H1 (cell line): ENCODE measurements at regions of chr1 and their contacts with region 1.

Region 1: DNA sequence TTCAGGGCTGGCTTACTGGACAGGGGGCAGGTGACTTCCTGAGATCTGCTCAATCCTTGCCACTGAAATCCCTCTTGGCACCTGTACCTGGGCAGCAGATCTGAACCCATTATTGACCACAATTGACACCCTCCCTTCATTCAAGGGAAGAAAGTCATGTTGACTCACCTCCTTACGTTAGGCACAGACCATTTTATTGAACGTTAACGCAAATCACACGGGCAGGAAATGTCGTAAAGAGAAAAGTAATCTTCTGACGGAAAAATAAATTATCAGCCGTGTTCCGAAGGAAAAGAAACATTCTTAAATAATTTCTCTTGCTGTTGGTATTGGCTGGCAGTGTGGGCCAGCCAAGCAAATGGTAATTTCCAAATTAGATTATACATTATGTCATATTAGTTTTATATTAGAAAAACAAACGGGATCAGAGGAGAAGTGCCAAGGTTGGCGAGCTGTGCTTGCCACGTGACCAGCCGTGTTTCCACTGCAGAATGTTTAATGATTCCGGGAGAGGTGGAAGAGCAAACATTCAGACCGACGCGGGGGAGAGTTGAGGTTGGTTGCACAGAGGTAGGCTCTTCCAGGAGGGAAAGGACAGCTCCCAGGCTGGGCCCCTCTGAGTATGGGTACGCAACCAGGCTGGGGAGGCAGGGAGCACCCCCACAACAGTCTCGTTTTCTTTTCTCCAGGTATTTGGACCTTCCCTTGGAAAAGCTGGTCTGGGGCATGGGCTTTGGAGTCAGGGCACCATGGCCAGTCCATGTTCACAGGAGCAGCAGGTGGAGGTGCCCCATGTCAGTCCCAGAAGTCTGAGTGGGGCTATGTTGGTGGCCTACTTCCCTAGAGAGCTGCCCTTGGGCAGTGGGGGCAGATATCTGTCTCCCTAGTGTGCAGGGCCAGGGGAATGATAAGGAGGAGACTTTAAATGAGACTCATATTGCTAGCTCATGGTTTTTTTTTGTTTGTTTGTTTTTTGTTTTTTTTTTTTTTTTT is 121.1 kb downstream of the FOXD2 start:
- DNase-seq: no peak
- H3K4me3 ChIP-seq: no peak overlapping the region
- H3K27ac ChIP-seq: no peak overlapping the region
- H3K4me1 ChIP-seq: peaks cover 0 to 15% (median 4%) of the 10 kb centered on the region in 4 experiments; a peak in 3 of 7 replicates
- H3K27me3 ChIP-seq: peaks cover 0 to 3% (median 0%) of the 10 kb centered on the region in 4 experiments; a peak in 3 of 7 replicates
- CTCF ChIP-seq: no peak
- EP300 ChIP-seq: no peak
- POLR2A ChIP-seq: no peak
- RAD21 ChIP-seq: no peak

Region 2: GRCh38 chr1:47532921-47533792 is 25.7 kb before region 1 on chr1:
- CTCF ChIA-PET with region 1: interaction called, 29 read pairs
- POLR2A ChIA-PET with region 1: no interaction called
- DNase-seq: peak in 1 of 2 experiments; percentile 84
- H3K4me3 ChIP-seq: peak overlapping the region; percentile 48 to 67 (median 58)
- H3K27ac ChIP-seq: no peak overlapping the region
- H3K4me1 ChIP-seq: peaks cover 3 to 10% (median 7%) of the 10 kb centered on the region in 4 experiments
- H3K27me3 ChIP-seq: peaks cover 0 to 7% (median 4%) of the 10 kb centered on the region in 4 experiments; a peak in 2 of 7 replicates
- CTCF ChIP-seq: 0 out of 4 replicates have a peak, but pooled peaks of 1 of the 3 experiments have one; percentile 2
- EP300 ChIP-seq: no peak
- POLR2A ChIP-seq: no peak
- RAD21 ChIP-seq: no peak

Region 3: DNA sequence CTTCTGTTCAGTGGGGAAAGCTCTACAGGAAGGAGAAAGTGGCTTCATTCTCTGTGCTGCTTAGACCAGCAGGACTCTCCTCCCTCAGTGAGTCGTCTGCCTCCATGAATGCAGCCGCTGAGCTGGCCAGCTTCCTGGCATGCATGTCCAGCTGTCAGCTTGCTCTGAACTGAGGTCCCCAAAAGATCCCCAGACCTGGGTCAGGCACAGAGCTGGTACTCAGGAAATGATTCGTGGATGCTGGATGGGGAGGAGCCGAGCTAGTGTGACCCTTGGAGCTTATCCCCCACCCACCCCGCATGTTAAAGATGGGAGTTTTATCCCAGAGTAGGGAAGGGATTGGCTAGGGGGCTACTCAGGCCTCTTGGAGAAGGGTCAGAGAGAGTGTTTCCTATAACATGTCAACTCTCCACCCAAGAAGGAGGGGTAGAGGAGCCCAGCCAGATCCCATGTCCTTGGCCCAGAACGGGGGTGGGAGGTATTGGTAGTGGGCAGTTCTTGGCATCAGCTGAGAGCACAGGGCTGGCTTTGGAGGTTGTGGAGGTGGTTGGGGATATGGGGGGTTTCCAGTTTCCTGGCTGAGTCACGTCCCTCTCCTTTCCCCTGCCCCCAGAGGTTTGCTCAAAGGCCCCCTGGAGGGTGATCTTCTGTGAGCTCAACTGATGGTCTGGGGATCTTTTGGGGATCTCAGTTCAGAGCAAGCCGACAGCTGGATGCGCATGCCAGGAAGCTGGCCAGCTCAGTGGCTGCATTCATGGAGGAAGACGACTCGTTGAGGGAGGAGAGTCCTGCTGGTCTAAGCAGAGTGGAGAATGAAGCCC is 10.9 kb before region 1 on chr1:
- CTCF ChIA-PET with region 1: interaction called, 70 read pairs
- POLR2A ChIA-PET with region 1: interaction called, 5 read pairs
- DNase-seq: no peak
- H3K4me3 ChIP-seq: no peak overlapping the region
- H3K27ac ChIP-seq: no peak overlapping the region
- H3K4me1 ChIP-seq: peaks cover 0 to 11% (median 5%) of the 10 kb centered on the region in 4 experiments; a peak in 6 of 7 replicates
- H3K27me3 ChIP-seq: peaks cover 0 to 2% (median 0%) of the 10 kb centered on the region in 4 experiments; a peak in 3 of 7 replicates
- CTCF ChIP-seq: no peak
- EP300 ChIP-seq: no peak
- POLR2A ChIP-seq: no peak
- RAD21 ChIP-seq: no peak

Region 4: DNA sequence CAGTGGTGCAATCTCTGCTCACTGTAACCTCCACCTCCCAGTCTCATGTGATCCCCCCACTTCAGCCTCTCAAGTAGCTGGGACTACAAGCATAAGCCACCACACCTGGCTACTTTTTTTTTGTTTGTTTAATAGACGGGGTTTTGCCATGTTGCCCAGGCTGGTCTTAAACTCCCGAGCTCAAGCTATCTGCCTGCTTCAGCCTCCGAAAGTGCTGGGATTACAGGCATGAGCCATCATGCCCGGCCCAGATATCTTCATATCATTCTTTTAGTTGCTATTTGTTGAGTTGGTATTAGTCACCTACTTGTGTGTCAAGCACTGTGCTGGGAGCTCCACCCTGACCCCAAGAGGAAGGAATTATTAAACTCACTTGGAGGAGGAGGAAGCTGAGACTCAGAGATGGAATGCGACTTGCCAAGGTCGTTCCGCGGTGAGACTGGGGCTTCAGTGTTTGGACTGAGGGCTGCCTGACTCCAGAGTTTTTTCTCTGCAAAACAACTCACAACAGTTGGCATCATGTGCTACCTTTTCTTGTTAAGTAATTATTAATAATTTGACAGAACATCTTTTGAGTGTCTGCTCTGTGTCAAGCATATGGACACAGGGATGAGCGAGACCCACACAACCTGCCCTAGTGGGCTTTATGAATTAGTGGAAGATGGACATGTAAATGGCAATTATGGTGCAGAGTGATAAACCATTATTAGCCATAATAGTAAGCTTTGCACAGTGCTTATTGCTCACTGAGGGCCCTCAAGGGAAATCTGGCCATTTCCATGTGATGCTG is 11.0 kb after region 1 on chr1:
- CTCF ChIA-PET with region 1: interaction called, 13 read pairs
- POLR2A ChIA-PET with region 1: interaction called, 3 read pairs
- DNase-seq: no peak
- H3K4me3 ChIP-seq: no peak overlapping the region
- H3K27ac ChIP-seq: no peak overlapping the region
- H3K4me1 ChIP-seq: peaks cover 6 to 21% (median 16%) of the 10 kb centered on the region in 4 experiments
- H3K27me3 ChIP-seq: peaks cover 0 to 3% (median 2%) of the 10 kb centered on the region in 4 experiments; a peak in 2 of 7 replicates
- CTCF ChIP-seq: peak in 2 of 3 experiments; percentile 38 to 54; a peak in 3 of 4 replicates
- EP300 ChIP-seq: no peak
- POLR2A ChIP-seq: no peak
- RAD21 ChIP-seq: peak in 1 of 2 experiments; percentile 46; a peak in 3 of 4 replicates

Region 5: DNA sequence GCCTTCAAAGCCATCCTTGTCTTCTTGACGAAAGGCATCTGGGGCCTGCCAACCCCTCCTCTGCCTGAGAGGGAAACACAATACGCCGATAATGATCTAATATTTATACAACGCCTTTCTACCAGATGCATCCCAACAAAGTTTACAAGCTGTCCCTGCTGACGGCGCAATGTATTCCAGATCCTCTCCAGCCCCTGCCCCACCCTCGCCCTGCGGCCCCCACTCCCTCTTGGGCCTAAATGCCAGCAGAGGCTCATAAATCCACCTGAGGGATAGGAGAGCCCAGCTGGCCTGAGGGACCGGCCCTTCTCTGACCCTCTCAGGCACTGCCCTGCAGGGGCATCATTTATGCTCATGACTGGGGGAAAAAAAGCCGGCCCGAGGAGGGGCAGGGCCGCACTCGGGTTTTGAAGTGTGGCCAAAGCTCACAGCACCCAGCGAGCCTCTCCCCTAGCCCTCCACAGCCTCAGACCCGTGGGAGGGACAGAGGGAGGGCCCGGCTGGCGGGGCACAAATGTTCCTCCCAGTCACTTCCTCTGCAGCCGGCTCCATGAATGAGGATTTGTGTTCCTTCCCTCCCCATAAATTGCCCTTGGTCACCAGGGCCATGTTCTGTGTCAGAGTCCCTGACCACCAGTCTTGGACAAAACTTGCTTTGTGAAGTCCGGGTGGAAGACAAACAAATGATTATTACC is 19.3 kb after region 1 on chr1:
- CTCF ChIA-PET with region 1: interaction called, 43 read pairs
- POLR2A ChIA-PET with region 1: no interaction called
- DNase-seq: no peak
- H3K4me3 ChIP-seq: no peak overlapping the region
- H3K27ac ChIP-seq: no peak overlapping the region
- H3K4me1 ChIP-seq: peaks cover 4 to 17% (median 9%) of the 10 kb centered on the region in 4 experiments
- H3K27me3 ChIP-seq: no peaks in the 10 kb centered on the region
- CTCF ChIP-seq: no peak
- EP300 ChIP-seq: no peak
- POLR2A ChIP-seq: no peak
- RAD21 ChIP-seq: no peak

Region 6: GRCh38 chr1:47618830-47619229 is 59.9 kb after region 1 on chr1:
- CTCF ChIA-PET with region 1: interaction called, 12 read pairs
- POLR2A ChIA-PET with region 1: no interaction called
- DNase-seq: peak in 1 of 2 experiments; percentile 28
- H3K4me3 ChIP-seq: no peak overlapping the region
- H3K27ac ChIP-seq: no peak overlapping the region
- H3K4me1 ChIP-seq: no peaks in the 10 kb centered on the region
- H3K27me3 ChIP-seq: no peaks in the 10 kb centered on the region; a peak in 3 of 7 replicates
- CTCF ChIP-seq: no peak
- EP300 ChIP-seq: no peak
- POLR2A ChIP-seq: no peak
- RAD21 ChIP-seq: no peak